ENCODE measurements at regions of chr14 and their contacts with region 1.

Region 1: GRCh38 chr14:24141097-24141880 is at the start of gene EMC9:
- DNase-seq: peak; percentile 100
- ATAC-seq: peak; percentile 90 to 96 (median 94)
- H3K4me3 ChIP-seq: peak within 1 kb of the TSS; percentile 64 to 95 (median 72)
- H3K27ac ChIP-seq: peak within 1 kb of the TSS; percentile 59 to 96 (median 90)
- H3K4me1 ChIP-seq: peaks cover 3 to 91% (median 44%) of the 10 kb centered on the region in 12 donors
- H3K27me3 ChIP-seq: no peaks in the 10 kb centered on the region
- CTCF ChIP-seq: peak; percentile 26 to 75 (median 57)
- POLR2A ChIP-seq: peak in 1 of 2 donors; percentile 94
- total RNA-seq, gene EMC9: 9.6 to 18.7 (median 13.8) TPM

Region 2: GRCh38 chr14:24108336-24108874 is 32.9 kb before region 1 on chr14:
- intact Hi-C with region 1: loop called in 2 of 10 experiments (anchors 5 kb)
- DNase-seq: no peak
- ATAC-seq: no peak
- H3K4me3 ChIP-seq: no peak overlapping the region
- H3K27ac ChIP-seq: peak overlapping the region in 3 of 12 donors; percentile 7 to 63 (median 44)
- H3K4me1 ChIP-seq: peaks cover 0 to 22% (median 8%) of the 10 kb centered on the region in 12 donors
- H3K27me3 ChIP-seq: no peaks in the 10 kb centered on the region
- CTCF ChIP-seq: no peak
- POLR2A ChIP-seq: no peak

Region 3: GRCh38 chr14:24232121-24232644 is 90.9 kb after region 1 on chr14 and contains the start of gene NEDD8:
- intact Hi-C with region 1: loop called in 1 of 10 experiments (anchors 5 kb)
- DNase-seq: peak; percentile 92 to 95 (median 93)
- ATAC-seq: peak; percentile 89 to 93 (median 90)
- H3K4me3 ChIP-seq: peak within 1 kb of the TSS; percentile 55 to 99 (median 88)
- H3K27ac ChIP-seq: peak within 1 kb of the TSS; percentile 72 to 98 (median 93)
- H3K4me1 ChIP-seq: peaks cover 0 to 53% (median 31%) of the 10 kb centered on the region in 12 donors
- H3K27me3 ChIP-seq: no peaks in the 10 kb centered on the region
- CTCF ChIP-seq: no peak
- POLR2A ChIP-seq: peak in 1 of 2 donors; percentile 63
- total RNA-seq, gene NEDD8: 174 to 217 (median 197) TPM